Naive thymus-derived CD4-positive, alpha-beta T cell (primary cell): ENCODE measurements at regions of chr18 and their contacts with region 1.

Region 1: DNA sequence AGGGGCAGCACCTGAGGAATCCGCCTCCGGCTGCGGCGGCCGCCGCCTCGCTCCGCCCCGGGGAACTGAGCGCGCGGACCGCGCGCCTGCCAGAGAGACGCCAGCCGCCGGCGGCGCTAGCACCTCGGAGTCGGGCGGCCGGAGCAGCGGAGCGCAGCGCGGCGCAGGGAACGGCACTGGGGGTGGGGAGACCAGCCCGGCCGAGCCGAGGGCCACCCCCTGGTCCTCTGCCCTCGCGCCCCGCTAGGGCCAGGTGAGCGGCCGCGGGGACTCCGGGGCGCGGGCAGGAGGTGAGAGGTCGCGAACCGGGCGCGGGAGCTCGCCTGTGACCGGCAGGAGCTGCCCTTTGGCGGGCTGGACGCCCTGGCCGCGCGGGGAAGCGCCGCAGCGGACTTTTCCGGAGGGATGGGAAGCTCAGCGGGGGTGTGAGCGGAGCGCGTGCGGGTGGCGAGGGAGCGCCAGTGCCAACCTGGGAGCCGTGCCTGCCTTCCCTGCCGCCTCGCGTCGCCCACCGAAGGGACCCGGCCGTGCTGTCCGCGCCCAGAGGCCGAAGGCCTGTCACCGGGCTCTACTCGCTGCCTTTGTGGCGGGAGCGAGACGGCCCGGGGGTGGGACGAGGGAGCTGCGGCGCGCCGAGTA is at the start of gene GREB1L:
- DNase-seq: peak in 1 of 9 donors; percentile 30
- ATAC-seq: peak; percentile 22
- H3K4me3 ChIP-seq: no peak within 1 kb of the TSS
- H3K4me3 Mint-ChIP-seq: peak within 1 kb of the TSS in 8 of 10 donors; percentile 40 to 80 (median 60)
- H3K27ac ChIP-seq: no peak within 1 kb of the TSS
- H3K27ac Mint-ChIP-seq: no peak within 1 kb of the TSS
- H3K4me1 ChIP-seq: no peaks in the 10 kb centered on the region
- H3K4me1 Mint-ChIP-seq: peaks cover 0 to 17% (median 6%) of the 10 kb centered on the region in 7 donors
- H3K27me3 ChIP-seq: peaks cover 0 to 5% of the 10 kb centered on the region in 2 donors
- H3K27me3 Mint-ChIP-seq: peaks cover 60 to 76% (median 71%) of the 10 kb centered on the region in 5 donors
- total RNA-seq, gene GREB1L: not detected

Region 2: DNA sequence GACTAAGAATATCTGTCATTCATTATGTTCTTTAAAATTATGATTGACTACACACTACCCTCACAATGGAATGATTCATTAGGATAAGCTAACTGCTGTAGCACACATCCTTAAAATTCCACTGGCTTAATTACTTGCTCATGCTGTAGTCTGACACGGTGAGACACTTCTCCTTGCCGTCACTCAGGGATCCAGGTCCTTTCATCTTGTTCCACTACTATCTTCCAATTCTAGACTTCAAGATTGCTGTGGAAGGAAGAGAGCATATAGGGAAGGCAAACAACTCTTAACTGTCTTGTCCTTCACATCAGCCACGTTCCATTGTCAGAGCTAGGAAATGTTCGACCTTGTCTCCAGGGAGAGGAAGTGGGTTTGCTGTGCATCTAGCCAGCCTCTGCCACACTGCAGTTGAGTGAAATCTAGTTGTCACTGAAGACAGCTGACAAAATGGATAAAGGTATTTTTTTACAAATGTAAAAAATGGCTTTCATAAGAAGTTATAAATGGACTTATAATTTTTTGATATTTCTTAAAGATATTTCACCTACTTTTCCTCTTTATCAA is 29.8 kb after region 1 on chr18:
- CTCF ChIA-PET with region 1: no interaction called
- POLR2A ChIA-PET with region 1: no interaction called
- intact Hi-C with region 1: no loop called
- DNase-seq: no peak
- ATAC-seq: no peak
- H3K4me3 ChIP-seq: no peak overlapping the region
- H3K4me3 Mint-ChIP-seq: no peak overlapping the region
- H3K27ac ChIP-seq: no peak overlapping the region
- H3K27ac Mint-ChIP-seq: no peak overlapping the region
- H3K4me1 ChIP-seq: no peaks in the 10 kb centered on the region
- H3K4me1 Mint-ChIP-seq: no peaks in the 10 kb centered on the region
- H3K27me3 ChIP-seq: no peaks in the 10 kb centered on the region
- H3K27me3 Mint-ChIP-seq: peaks cover 0 to 17% (median 5%) of the 10 kb centered on the region in 5 donors

Region 3: DNA sequence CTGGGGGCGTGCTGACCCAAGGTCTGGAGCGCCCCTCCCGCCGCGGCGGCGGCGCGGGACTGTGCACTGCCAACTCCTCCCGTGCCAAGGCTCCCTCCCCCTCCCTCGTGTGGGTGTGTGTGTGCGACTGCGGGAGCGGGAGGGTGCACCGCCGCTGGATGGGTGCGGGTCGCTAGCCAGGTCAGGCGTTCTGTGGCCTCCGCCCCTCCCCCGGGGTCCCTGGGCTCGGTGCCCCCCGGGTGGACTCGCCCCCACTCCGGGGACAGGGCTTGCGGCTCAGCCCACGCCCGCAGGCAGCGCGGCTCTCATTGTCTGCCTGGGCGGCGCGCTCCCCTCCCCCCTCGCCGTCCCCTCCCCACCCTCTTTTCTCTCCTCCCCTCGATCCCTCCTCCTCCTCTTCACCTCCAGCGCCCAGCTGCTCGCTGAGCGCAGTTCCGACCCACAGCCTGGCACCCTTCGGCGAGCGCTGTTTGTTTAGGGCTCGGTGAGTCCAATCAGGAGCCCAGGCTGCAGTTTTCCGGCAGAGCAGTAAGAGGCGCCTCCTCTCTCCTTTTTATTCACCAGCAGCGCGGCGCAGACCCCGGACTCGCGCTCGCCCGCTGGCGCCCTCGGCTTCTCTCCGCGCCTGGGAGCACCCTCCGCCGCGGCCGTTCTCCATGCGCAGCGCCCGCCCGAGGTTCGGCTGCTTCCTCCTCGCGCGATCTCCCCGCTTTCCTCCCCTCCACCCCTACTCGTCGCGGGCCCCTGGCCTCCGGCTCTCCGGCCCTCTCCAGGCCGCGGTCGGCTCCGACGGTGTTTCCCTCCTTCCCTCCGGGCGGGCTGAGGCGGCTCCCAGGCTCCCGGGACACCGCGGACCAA is 927.0 kb after region 1 on chr18 and contains the start of gene GATA6:
- CTCF ChIA-PET with region 1: no interaction called
- POLR2A ChIA-PET with region 1: no interaction called
- intact Hi-C with region 1: loop called in 1 of 2 experiments (anchors 10 kb)
- DNase-seq: peak in 1 of 9 donors; percentile 31
- ATAC-seq: peak; percentile 63
- H3K4me3 ChIP-seq: peak within 1 kb of the TSS; percentile 38
- H3K4me3 Mint-ChIP-seq: peak within 1 kb of the TSS; percentile 52 to 87 (median 80)
- H3K27ac ChIP-seq: no peak within 1 kb of the TSS
- H3K27ac Mint-ChIP-seq: peak within 1 kb of the TSS in 1 of 9 donors; percentile 81
- H3K4me1 ChIP-seq: peaks cover 0 to 19% of the 10 kb centered on the region in 2 donors
- H3K4me1 Mint-ChIP-seq: peaks cover 0 to 23% (median 20%) of the 10 kb centered on the region in 7 donors
- H3K27me3 ChIP-seq: peaks cover 16 to 28% of the 10 kb centered on the region in 2 donors
- H3K27me3 Mint-ChIP-seq: peaks cover 60 to 79% (median 65%) of the 10 kb centered on the region in 5 donors
- total RNA-seq, gene GATA6: 0.19 to 0.44 TPM in 2 of 5 experiments, not detected in the others

Region 4: DNA sequence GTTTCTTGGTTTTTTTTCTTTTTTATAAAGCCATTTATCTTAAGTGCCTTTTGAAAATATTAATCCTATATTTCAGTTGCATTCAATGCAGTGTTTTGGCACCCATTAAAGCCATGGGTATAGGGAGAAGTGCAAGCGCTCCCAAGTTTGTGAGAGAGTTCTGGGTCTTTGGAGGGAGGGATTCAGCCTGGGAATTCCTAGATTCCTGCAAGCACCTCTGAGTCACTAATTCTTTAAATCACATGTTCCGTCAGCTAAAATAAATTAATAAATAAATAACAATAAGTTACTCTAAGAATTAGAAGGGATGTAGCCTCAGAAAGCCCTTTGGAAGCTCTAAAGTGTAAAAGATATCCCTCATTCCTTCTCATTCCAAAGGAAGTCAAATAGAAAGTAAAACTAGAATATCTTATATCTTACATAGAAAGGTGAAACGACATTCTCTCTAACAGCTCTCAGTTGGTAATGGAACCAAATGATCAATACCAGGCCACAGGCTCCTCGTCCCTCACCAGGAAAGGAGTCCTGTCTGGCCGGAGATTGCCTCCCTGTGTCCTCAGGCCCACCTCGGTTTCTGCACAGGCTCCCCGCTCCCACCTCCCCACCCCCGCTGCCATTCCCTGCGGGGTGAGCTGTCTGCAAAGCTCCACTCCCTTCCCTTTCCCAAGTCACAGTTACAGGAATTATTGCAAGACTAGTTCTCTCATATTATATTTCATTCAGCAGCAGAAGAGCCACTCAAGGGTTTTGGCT is 1468.5 kb after region 1 on chr18:
- CTCF ChIA-PET with region 1: no interaction called
- POLR2A ChIA-PET with region 1: no interaction called
- intact Hi-C with region 1: no loop called
- DNase-seq: no peak
- ATAC-seq: no peak
- H3K4me3 ChIP-seq: no peak overlapping the region
- H3K4me3 Mint-ChIP-seq: no peak overlapping the region
- H3K27ac ChIP-seq: no peak overlapping the region
- H3K27ac Mint-ChIP-seq: no peak overlapping the region
- H3K4me1 ChIP-seq: no peaks in the 10 kb centered on the region
- H3K4me1 Mint-ChIP-seq: peaks cover 0 to 2% (median 0%) of the 10 kb centered on the region in 7 donors
- H3K27me3 ChIP-seq: no peaks in the 10 kb centered on the region
- H3K27me3 Mint-ChIP-seq: peaks cover 0 to 15% (median 8%) of the 10 kb centered on the region in 5 donors

Region 5: GRCh38 chr18:22838639-22839277 is 1596.5 kb after region 1 on chr18:
- CTCF ChIA-PET with region 1: no interaction called
- POLR2A ChIA-PET with region 1: no interaction called
- intact Hi-C with region 1: no loop called
- DNase-seq: peak in 3 of 9 donors; percentile 6 to 15 (median 7)
- ATAC-seq: no peak
- H3K4me3 ChIP-seq: no peak overlapping the region
- H3K4me3 Mint-ChIP-seq: no peak overlapping the region
- H3K27ac ChIP-seq: no peak overlapping the region
- H3K27ac Mint-ChIP-seq: no peak overlapping the region
- H3K4me1 ChIP-seq: peaks cover 0 to 5% of the 10 kb centered on the region in 2 donors
- H3K4me1 Mint-ChIP-seq: no peaks in the 10 kb centered on the region
- H3K27me3 ChIP-seq: peaks cover 0 to 5% of the 10 kb centered on the region in 2 donors
- H3K27me3 Mint-ChIP-seq: peaks cover 0 to 17% (median 4%) of the 10 kb centered on the region in 5 donors